BJ (cell line): ENCODE measurements at regions of chr7 and their contacts with region 1.

Region 1: GRCh38 chr7:131292141-131292905 is 35.4 kb upstream of the MKLN1 start:
- DNase-seq: no peak
- H3K4me3 ChIP-seq: no peak overlapping the region
- H3K27me3 ChIP-seq: no peaks in the 10 kb centered on the region
- CTCF ChIP-seq: no peak

Region 2: GRCh38 chr7:131321646-131322045 is 29.3 kb after region 1 on chr7:
- CTCF ChIA-PET with region 1: no interaction called
- POLR2A ChIA-PET with region 1: interaction called, 28 read pairs
- DNase-seq: no peak
- H3K4me3 ChIP-seq: no peak overlapping the region
- H3K27me3 ChIP-seq: no peaks in the 10 kb centered on the region
- CTCF ChIP-seq: no peak